Right ventricle myocardium superior (tissue), 1 donor: ENCODE measurements at regions of chr22 and their contacts with region 1.

Region 1: GRCh38 chr22:45645526-45646414 is 25.9 kb upstream of the ATXN10 start:
- DNase-seq: peak; percentile 84
- ATAC-seq: peak; percentile 94

Region 2: DNA sequence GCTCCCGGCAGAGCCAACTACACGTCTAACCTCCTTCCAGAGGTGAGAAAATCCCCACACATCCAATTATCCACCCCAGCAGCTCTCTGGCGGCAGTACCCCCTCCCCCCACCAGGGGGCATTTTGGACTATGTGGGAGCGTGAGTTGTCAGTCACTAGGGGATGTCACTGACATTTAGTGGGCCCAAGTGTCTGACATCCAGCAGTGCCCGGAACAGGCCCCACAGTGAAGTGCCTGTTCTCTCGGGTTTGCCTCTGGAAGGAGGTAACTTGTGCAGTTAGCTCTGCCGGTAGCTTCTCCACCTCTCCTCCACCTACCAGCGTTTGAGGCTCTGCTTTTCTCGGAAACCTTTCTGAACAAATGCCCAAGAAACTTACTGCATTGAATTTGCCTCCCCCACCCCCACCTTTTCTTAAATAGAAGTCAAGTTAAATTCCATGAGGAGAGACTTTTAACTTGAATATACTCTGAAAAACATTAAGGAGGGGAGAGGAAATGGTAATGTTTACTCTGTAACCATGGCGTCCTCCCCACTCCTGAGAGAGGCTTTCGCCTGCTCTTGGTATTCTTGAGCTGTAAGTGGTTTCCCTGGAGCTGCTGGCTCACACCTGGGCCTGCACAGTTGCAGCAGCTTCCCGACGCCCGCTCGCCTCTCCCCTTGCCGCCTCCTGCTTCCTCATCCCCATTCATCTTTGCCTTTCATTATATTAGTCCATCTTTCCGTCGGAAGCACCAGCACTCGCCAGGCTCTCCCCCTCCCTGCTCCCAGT is 218.4 kb after region 1 on chr22:
- intact Hi-C with region 1: loop called (anchors 5 kb)
- DNase-seq: peak; percentile 84
- ATAC-seq: peak; percentile 78